Prostate gland (tissue), 2 donors: ENCODE measurements at regions of chr11 and their contacts with region 1.

Region 1: GRCh38 chr11:112588252-112588694 is 327.6 kb upstream of the PLET1 start:
- DNase-seq: peak; percentile 63
- H3K4me3 ChIP-seq: no peak overlapping the region
- H3K27ac ChIP-seq: no peak overlapping the region
- H3K4me1 ChIP-seq: no peaks in the 10 kb centered on the region
- H3K27me3 ChIP-seq: no peaks in the 10 kb centered on the region
- CTCF ChIP-seq: peak; percentile 32 to 77 (median 68)
- POLR2A ChIP-seq: no peak

Region 2: DNA sequence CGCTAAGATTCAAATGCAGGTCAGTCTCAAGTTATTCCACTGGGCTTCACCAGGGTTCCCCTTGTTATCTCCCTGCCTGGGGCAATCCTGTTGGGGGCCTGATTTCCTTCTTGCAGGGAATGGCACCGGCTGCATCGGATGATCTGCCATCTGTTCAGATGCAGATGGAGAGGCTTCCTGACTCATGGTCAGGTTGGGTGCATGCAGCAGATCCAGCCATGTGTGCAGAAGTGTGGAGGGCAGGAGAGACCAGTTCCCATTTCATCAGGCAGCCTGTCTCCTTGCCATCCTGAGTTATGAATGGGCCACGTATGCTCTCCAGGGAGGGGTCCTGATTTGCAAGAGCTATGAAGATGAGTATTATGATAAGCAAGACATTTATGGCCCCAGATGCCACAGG is 166.4 kb before region 1 on chr11:
- intact Hi-C with region 1: no loop called
- DNase-seq: no peak
- H3K4me3 ChIP-seq: no peak overlapping the region
- H3K27ac ChIP-seq: no peak overlapping the region
- H3K4me1 ChIP-seq: no peaks in the 10 kb centered on the region
- H3K27me3 ChIP-seq: no peaks in the 10 kb centered on the region
- CTCF ChIP-seq: no peak
- POLR2A ChIP-seq: no peak

Region 3: DNA sequence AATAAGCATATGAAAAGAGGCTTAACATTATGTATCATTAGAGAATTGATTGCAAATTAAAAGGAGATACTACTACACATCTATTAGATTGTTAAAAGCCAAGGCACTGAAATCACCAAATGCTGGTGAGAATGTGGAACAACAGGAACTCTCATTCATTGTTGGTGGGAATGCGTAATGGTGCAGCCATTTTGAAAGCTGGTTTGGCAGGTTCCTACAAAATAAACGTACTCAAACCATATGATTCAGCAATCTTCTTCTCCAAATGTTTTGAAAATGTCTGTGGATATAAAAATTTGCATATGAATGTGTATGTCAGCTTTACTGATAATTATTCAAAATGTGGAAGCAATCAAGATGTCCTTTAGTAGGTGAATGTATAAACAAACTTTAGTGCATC is 151.2 kb before region 1 on chr11:
- intact Hi-C with region 1: no loop called
- DNase-seq: no peak
- H3K4me3 ChIP-seq: no peak overlapping the region
- H3K27ac ChIP-seq: no peak overlapping the region
- H3K4me1 ChIP-seq: no peaks in the 10 kb centered on the region
- H3K27me3 ChIP-seq: no peaks in the 10 kb centered on the region
- CTCF ChIP-seq: no peak
- POLR2A ChIP-seq: no peak

Region 4: DNA sequence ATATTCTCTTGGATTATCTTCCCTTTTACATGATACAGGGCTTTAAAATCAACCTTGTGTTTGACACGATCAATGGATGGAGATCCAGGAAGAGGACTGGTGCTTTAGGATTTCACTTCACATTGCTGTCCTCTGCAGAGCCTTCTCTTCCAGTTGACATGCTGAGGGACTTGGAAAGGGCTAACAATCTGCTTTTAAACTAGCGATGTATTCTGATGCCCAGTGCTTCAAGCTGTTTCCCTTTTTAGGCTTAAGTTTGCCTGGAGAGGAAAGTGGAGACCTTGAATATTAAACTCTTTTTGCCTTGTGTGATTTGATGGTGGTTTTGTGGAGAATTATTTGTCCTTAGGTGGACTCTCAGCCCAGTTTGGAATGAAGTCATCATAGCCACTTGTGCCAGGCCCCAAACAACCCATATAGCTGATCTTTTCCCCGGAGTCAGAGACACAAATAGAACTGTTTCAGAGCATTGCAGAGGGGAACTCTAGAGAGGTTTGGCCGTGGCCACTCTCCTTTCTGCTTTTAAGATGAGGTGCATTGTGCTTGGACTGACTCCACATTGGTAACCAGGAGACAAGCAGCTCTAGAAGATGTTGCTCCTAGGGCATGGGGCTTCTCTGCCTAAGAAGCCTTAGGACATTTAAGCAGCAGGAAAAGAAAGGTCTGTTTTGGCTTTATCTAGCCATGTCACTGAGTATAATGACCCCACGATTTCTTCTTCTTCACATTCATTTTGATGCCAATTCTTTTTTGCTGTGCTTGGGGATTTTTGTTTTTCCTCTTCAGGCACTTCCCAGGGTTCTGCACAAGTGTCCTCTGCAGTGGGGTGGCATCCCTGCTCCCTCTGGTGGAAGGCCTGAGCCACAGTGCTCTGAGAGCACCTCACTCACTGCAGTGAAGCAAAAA is 525.8 kb after region 1 on chr11:
- intact Hi-C with region 1: loop called (anchors 2 kb)
- DNase-seq: peak; percentile 27
- H3K4me3 ChIP-seq: no peak overlapping the region
- H3K27ac ChIP-seq: no peak overlapping the region
- H3K4me1 ChIP-seq: no peaks in the 10 kb centered on the region
- H3K27me3 ChIP-seq: no peaks in the 10 kb centered on the region
- CTCF ChIP-seq: peak; percentile 29 to 80 (median 64)
- POLR2A ChIP-seq: no peak

Region 5: DNA sequence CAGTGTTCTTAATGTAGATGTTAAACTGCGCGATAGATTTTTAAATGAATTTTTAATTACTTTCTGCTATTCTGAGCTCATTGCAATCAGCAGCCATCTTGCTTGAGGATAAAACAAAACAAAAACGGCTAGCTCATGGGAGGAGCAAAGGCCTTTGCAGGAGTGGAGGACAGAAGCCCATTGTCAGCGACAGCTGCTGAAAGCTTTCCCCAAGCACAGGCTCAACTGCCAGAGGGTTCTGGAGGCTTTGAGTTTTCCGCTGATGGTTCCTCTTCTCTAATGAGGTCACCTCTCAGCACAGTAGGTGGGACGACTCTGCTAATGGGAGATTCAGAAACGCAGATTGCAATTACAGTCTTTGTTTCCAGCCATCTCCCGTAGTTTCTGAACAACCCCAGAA is 559.0 kb after region 1 on chr11:
- intact Hi-C with region 1: no loop called
- DNase-seq: no peak
- H3K4me3 ChIP-seq: no peak overlapping the region
- H3K27ac ChIP-seq: no peak overlapping the region
- H3K4me1 ChIP-seq: no peaks in the 10 kb centered on the region
- H3K27me3 ChIP-seq: no peaks in the 10 kb centered on the region
- CTCF ChIP-seq: no peak
- POLR2A ChIP-seq: no peak

Region 6: DNA sequence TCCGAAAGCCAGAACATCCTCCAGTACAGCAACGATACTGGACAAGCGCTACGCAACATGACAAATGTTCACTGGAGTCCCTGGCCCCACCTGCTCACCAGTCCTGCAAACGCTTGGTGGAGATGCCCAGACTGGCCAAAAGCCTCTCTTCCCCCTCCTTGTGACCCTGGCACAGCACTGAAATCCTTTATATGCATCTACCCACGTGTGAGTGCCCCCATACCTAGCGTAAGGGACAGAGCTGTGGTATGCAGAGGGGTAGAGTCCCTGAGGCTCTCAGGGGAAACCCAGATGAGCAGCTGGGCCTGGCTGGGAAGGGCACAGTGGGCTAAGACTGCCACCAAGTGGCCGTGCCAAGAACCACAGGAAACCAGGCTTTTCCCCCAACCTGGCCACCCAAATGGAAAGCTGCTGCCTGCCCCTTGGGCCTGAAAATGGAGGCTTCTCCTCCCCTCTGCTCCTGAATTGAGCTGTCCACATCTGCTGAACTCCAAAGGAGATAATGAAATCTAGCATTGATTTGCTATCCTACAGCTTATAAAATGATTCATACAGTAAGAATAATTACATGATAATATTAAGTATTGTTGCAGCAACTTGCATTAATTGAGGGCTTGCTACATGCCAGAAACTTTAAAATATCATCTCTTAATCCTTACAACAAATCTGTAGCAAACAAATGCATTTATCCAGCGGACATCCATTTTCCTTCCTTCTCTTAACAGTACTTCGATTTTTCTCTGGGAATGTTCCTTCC is 701.3 kb after region 1 on chr11:
- intact Hi-C with region 1: loop called (anchors 2 kb)
- DNase-seq: peak; percentile 27
- H3K4me3 ChIP-seq: no peak overlapping the region
- H3K27ac ChIP-seq: no peak overlapping the region
- H3K4me1 ChIP-seq: no peaks in the 10 kb centered on the region
- H3K27me3 ChIP-seq: no peaks in the 10 kb centered on the region
- CTCF ChIP-seq: peak; percentile 71 to 85 (median 81)
- POLR2A ChIP-seq: no peak